Sciatic nerve (tissue), 2 donors: ENCODE measurements at regions of chr20 and their contacts with region 1.

Region 1: DNA sequence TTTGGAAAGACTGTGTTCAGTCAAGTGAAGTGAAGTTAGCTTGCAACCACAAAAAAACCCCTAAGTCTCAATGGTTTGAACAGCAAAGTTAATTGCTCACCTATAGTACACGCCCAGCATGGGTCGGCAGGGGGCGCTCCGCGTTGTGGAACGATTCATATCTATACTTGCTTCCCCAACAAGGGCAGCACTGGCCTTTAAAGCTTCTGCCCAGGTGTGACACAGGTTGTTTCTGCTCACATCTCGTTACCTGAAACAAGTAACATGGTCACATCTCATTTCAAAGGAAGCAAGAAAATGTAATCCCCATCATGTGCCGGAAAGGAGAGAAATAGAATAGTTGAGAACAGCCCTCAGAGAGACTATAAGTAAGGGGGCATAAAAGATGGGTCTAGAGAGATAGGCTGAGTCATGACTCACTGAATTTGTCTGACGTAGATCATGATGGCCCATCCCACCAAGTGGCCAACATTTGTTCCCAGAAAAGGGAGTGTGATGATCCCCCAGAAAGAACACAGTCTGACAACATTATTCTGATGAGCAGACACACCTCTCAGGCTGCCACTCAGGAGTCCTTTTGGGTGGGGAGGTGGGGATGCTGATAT is 29.0 kb downstream of the HNF4A start:
- DNase-seq: peak; percentile 90
- ATAC-seq: peak; percentile 43

Region 2: GRCh38 chr20:43530321-43531090 is 854.0 kb before region 1 on chr20:
- intact Hi-C with region 1: no loop called
- DNase-seq: no peak
- ATAC-seq: no peak

Region 3: GRCh38 chr20:44615169-44615791 is 230.8 kb after region 1 on chr20:
- intact Hi-C with region 1: loop called (anchors 5 kb)
- DNase-seq: no peak
- ATAC-seq: peak; percentile 38